Activated CD4-positive, alpha-beta memory T cell treated with anti-CD3 and anti-CD28 coated beads for 36 hours (primary cell): ENCODE measurements at regions of chr7 and their contacts with region 1.

Region 1: GRCh38 chr7:26090927-26091519 is 61.0 kb upstream of the NFE2L3 start:
- DNase-seq: no peak
- H3K4me3 Mint-ChIP-seq: no peak overlapping the region
- H3K27ac Mint-ChIP-seq: no peak overlapping the region
- H3K4me1 Mint-ChIP-seq: peaks cover 14% of the 10 kb centered on the region
- H3K27me3 Mint-ChIP-seq: no peaks in the 10 kb centered on the region

Region 2: GRCh38 chr7:25500393-25500921 is 590.6 kb before region 1 on chr7:
- CTCF ChIA-PET with region 1: no interaction called
- POLR2A ChIA-PET with region 1: no interaction called
- intact Hi-C with region 1: no loop called
- DNase-seq: no peak
- H3K4me3 Mint-ChIP-seq: no peak overlapping the region
- H3K27ac Mint-ChIP-seq: no peak overlapping the region
- H3K4me1 Mint-ChIP-seq: peaks cover 8% of the 10 kb centered on the region
- H3K27me3 Mint-ChIP-seq: peaks cover 7% of the 10 kb centered on the region

Region 3: GRCh38 chr7:25881317-25882037 is 209.5 kb before region 1 on chr7:
- CTCF ChIA-PET with region 1: no interaction called
- POLR2A ChIA-PET with region 1: no interaction called
- intact Hi-C with region 1: no loop called
- DNase-seq: no peak
- H3K4me3 Mint-ChIP-seq: no peak overlapping the region
- H3K27ac Mint-ChIP-seq: no peak overlapping the region
- H3K4me1 Mint-ChIP-seq: no peaks in the 10 kb centered on the region
- H3K27me3 Mint-ChIP-seq: peaks cover 20% of the 10 kb centered on the region

Region 4: DNA sequence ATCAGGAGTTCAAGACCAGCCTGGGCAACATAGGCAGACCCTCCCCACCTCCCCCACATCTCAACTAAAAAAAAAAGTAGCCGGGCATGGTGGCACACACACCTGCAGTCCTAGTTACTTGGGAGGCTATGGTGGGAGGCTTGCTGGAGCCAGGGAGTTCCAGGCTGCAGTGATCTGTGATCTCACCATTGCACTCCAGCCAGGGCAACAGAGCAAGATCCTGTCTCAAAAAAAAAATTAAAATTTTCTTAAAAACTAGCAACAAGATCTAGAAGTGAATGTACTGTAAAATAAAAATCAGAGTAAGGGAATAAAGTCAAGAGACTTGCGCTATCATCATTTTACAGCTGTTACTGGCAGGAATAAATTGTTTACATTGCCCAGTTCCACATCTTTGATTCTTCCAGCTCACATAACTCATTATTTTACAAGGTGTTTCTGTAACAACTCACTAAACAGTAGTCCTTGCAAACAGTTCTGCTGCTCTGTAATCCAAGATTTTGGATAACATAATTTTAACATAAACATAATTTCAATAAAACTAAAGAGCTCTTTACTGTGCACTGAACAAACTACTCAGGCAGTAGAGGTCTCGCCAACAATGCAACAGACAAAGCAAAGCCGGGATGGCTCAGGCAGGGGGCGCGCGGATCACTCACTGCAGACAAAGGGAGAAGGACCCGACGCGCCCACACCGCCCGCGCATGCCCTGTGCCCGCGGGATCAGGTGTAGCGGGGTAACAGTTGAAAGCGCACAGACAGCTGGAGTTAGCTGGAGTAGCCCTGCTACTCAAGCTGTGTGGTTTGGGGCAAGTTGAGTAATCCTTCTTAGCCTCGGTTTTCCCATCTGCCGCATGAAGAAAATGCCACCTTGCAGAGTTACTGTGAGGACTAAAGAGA is 12.3 kb before region 1 on chr7:
- CTCF ChIA-PET with region 1: interaction called, 43 read pairs
- POLR2A ChIA-PET with region 1: no interaction called
- intact Hi-C with region 1: no loop called
- DNase-seq: peak; percentile 87
- H3K4me3 Mint-ChIP-seq: no peak overlapping the region
- H3K27ac Mint-ChIP-seq: no peak overlapping the region
- H3K4me1 Mint-ChIP-seq: peaks cover 4% of the 10 kb centered on the region
- H3K27me3 Mint-ChIP-seq: peaks cover 24% of the 10 kb centered on the region

Region 5: GRCh38 chr7:26151953-26152781 is 61.1 kb after region 1 on chr7 and contains the start of gene NFE2L3:
- CTCF ChIA-PET with region 1: interaction called, 19 read pairs
- POLR2A ChIA-PET with region 1: interaction called, 6 read pairs
- intact Hi-C with region 1: loop called (anchors 2 kb)
- DNase-seq: peak; percentile 90
- H3K4me3 Mint-ChIP-seq: peak within 1 kb of the TSS; percentile 98
- H3K27ac Mint-ChIP-seq: peak within 1 kb of the TSS; percentile 92
- H3K4me1 Mint-ChIP-seq: peaks cover 51% of the 10 kb centered on the region
- H3K27me3 Mint-ChIP-seq: no peaks in the 10 kb centered on the region
- total RNA-seq, gene NFE2L3: 27.3 to 30.3 TPM

Region 6: DNA sequence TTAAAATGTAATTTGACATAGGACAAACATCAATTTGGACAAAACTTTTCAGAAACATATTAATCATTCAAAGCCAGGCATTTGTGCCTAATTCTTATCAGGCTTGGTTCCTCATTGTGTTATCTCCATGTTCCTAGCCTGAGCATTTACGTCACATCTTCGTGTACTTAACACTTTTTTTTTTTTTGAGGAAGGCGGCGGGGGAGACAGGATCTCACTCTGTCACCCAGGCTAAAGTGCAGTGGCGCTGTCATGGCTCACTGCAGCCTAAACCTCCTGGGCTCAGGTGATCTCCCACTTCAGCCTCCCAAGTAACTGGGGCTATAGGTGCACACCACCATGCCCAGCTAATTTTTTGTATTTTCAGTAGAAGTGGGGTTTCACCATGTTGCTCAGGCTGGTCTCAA is 89.8 kb after region 1 on chr7:
- CTCF ChIA-PET with region 1: interaction called, 10 read pairs
- POLR2A ChIA-PET with region 1: no interaction called
- intact Hi-C with region 1: no loop called
- DNase-seq: no peak
- H3K4me3 Mint-ChIP-seq: no peak overlapping the region
- H3K27ac Mint-ChIP-seq: no peak overlapping the region
- H3K4me1 Mint-ChIP-seq: peaks cover 29% of the 10 kb centered on the region
- H3K27me3 Mint-ChIP-seq: no peaks in the 10 kb centered on the region

Region 7: DNA sequence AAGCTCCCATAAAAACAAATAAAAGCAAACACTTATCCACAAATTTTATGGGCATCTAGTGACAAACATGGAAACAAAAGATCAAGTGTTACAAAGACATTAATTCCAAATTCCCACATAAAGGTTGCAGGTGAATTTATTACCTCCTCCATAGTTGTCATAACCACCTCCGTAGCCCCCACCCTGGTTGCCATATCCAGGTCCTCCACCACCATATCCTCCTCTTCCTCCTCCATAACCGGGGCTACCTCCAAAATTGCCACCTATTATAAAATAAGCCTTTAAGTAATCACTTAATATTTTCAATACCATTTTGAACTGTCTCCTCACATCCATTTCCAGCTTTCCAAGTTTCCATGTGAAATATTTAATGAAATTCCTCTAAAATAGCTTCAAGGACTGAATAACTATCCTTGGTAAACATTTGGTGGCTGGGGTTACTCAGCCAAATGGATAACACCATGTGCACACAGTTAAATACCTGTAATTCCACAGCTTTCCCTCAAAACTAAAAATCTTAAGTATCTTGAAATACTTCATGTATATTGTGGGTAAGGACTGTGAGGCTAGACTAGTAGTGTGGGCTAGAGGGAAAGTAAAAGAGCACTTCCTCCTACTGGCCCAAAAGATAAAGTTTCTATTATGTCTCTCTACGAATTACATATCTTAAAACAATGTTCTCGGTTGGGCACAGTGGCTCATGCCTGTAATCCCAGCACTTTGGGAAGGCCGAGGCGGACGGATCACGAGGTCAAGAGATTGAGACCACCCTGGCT is 102.6 kb after region 1 on chr7:
- CTCF ChIA-PET with region 1: interaction called, 35 read pairs
- POLR2A ChIA-PET with region 1: interaction called, 9 read pairs
- intact Hi-C with region 1: no loop called
- DNase-seq: no peak
- H3K4me3 Mint-ChIP-seq: peak overlapping the region; percentile 69
- H3K27ac Mint-ChIP-seq: peak overlapping the region; percentile 84
- H3K4me1 Mint-ChIP-seq: peaks cover 80% of the 10 kb centered on the region
- H3K27me3 Mint-ChIP-seq: no peaks in the 10 kb centered on the region

Region 8: DNA sequence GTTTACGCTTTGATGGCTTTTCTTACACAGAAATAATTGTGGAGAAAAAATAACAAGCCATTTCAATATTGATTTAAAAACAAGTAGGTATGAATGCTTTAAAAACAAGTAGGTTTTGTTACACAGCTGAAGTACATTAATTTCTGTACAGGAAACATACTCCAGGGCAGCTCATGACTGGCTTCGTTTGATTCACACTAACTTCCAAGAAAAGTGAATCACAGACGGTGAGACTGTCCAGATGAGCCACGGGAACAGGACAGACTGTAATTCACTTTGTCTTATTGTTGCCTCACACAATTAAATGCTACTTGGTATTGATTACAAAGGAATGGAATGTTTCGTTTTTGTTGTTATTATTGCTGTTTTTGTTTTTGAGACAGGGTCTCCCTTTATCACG is 174.0 kb after region 1 on chr7:
- CTCF ChIA-PET with region 1: no interaction called
- POLR2A ChIA-PET with region 1: no interaction called
- intact Hi-C with region 1: no loop called
- DNase-seq: peak; percentile 41
- H3K4me3 Mint-ChIP-seq: no peak overlapping the region
- H3K27ac Mint-ChIP-seq: no peak overlapping the region
- H3K4me1 Mint-ChIP-seq: peaks cover 11% of the 10 kb centered on the region
- H3K27me3 Mint-ChIP-seq: peaks cover 10% of the 10 kb centered on the region

Region 9: GRCh38 chr7:26291699-26292538 is 200.9 kb after region 1 on chr7 and contains the start of gene SNX10:
- CTCF ChIA-PET with region 1: interaction called, 12 read pairs
- POLR2A ChIA-PET with region 1: no interaction called
- intact Hi-C with region 1: loop called (anchors 2 kb)
- DNase-seq: peak; percentile 76
- H3K4me3 Mint-ChIP-seq: peak within 1 kb of the TSS; percentile 93
- H3K27ac Mint-ChIP-seq: peak within 1 kb of the TSS; percentile 90
- H3K4me1 Mint-ChIP-seq: peaks cover 28% of the 10 kb centered on the region
- H3K27me3 Mint-ChIP-seq: no peaks in the 10 kb centered on the region
- total RNA-seq, gene SNX10: 43.1 to 44.1 TPM

Region 10: GRCh38 chr7:26667500-26668133 is 576.6 kb after region 1 on chr7:
- CTCF ChIA-PET with region 1: interaction called, 5 read pairs
- POLR2A ChIA-PET with region 1: no interaction called
- intact Hi-C with region 1: loop called (anchors 5 kb)
- DNase-seq: peak; percentile 61
- H3K4me3 Mint-ChIP-seq: no peak overlapping the region
- H3K27ac Mint-ChIP-seq: no peak overlapping the region
- H3K4me1 Mint-ChIP-seq: peaks cover 19% of the 10 kb centered on the region
- H3K27me3 Mint-ChIP-seq: no peaks in the 10 kb centered on the region